GM12878 (cell line): ENCODE measurements at regions of chr4 and their contacts with region 1.

Region 1: DNA sequence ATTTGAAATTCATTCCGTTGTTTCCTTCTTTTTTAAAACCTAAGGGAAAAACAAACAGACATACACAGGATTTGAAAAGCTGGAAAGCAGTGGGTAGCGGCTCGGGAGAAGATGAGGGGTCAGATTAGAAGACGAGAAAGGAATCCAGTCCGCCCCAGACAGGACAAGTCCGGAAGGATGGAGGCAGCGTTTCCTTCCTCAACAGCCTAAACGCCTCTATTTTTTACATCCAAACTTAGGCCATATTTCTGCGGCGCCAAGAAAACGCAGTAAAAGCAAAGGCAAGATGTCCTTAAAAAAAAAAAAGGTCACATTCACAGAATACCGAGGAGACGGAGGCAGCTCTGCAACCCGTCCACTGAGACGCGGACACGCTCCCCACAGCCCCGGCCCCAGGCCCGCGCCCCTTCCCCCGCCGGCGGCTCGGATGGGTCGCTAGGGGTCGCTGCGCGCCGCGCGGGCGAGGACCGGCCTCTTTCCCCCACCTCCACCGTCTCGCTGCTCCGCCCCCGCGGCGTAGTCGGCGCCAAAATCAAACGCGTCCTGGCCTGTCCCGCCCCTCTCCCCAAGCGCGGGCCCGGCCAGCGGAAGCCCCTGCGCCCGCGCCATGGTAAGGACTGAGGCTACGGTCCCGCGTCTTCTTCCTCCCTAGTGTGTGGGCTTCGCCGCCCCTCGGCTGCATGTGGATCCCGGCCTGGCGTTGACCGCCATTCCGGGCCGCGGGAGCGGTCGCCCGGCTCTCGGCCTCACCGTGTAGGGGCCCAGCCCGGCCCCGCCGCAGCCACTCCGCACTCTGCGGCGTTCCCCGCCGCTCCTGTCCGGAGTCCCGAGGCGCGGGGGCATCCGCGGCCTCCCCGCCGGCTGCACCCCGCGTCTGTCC is at the start of gene MND1:
- DNase-seq: no peak
- ATAC-seq: peak; percentile 90
- H3K4me3 ChIP-seq: peak within 1 kb of the TSS; percentile 93
- H3K27ac ChIP-seq: peak within 1 kb of the TSS; percentile 76
- H3K4me1 ChIP-seq: peaks cover 22% of the 10 kb centered on the region; the same call in 1 of the 2 replicates
- H3K27me3 ChIP-seq: no peaks in the 10 kb centered on the region
- CTCF ChIP-seq: peak; percentile 73 to 93 (median 87)
- EP300 ChIP-seq: no peak
- POLR2A ChIP-seq: peak; percentile 87
- RAD21 ChIP-seq: peak; percentile 87
- polyA plus RNA-seq, gene MND1: 51.0 to 55.0 TPM

Region 2: DNA sequence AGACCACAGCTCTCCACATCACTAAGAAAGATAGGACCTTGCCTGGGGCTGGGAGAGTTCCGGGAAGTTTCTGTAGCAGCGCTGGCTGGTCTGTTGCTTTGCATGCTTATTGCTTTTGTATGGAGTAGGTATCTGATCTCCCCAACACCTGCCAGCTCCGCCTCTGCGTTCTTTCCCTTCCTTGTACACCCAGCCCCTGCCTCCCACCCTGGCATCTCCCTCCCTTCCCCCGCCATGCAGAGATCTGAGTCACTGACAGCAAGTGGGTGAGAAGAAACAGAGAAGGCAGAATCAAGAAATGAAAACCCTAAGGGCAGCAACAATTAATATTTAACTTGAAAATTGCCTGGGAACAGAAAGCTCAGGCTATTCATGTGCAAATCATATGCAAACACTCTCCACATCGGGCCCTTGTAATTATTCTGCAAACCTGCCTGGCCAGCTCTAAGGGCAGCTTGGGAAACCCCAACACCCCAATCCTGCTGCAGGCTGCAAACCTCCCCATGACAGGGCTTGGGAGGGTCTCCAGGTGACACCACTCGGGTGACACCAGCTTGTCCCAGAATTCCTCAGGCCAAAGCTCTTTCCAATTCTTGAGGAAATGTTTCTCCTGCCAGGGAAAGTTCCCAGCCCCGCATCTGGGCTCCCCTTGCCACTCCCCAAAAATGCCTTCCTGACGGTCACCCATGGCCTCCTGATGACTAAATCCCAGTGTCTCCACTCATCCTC is 1065.7 kb before region 1 on chr4:
- CTCF ChIA-PET with region 1: no interaction called
- POLR2A ChIA-PET with region 1: no interaction called
- RAD21 ChIA-PET with region 1: no interaction called
- SMC1A ChIA-PET with region 1: no interaction called
- in situ Hi-C with region 1: no loop called
- intact Hi-C with region 1: no loop called
- DNase-seq: peak; percentile 71
- ATAC-seq: peak; percentile 87
- H3K4me3 ChIP-seq: no peak overlapping the region
- H3K27ac ChIP-seq: no peak overlapping the region
- H3K4me1 ChIP-seq: no peaks in the 10 kb centered on the region
- H3K27me3 ChIP-seq: no peaks in the 10 kb centered on the region; a peak in 1 of 4 replicates
- CTCF ChIP-seq: no peak
- EP300 ChIP-seq: no peak; a peak in 1 of 4 replicates
- POLR2A ChIP-seq: no peak
- RAD21 ChIP-seq: no peak

Region 3: GRCh38 chr4:153266988-153267387 is 77.4 kb before region 1 on chr4:
- CTCF ChIA-PET with region 1: no interaction called
- POLR2A ChIA-PET with region 1: no interaction called
- RAD21 ChIA-PET with region 1: no interaction called
- SMC1A ChIA-PET with region 1: no interaction called
- in situ Hi-C with region 1: no loop called
- intact Hi-C with region 1: no loop called
- DNase-seq: no peak
- ATAC-seq: no peak
- H3K4me3 ChIP-seq: no peak overlapping the region
- H3K27ac ChIP-seq: no peak overlapping the region
- H3K4me1 ChIP-seq: no peaks in the 10 kb centered on the region
- H3K27me3 ChIP-seq: no peaks in the 10 kb centered on the region
- CTCF ChIP-seq: no peak
- EP300 ChIP-seq: no peak
- POLR2A ChIP-seq: no peak
- RAD21 ChIP-seq: no peak

Region 4: GRCh38 chr4:153383131-153383530 is 38.8 kb after region 1 on chr4:
- CTCF ChIA-PET with region 1: interaction called, 6 read pairs
- POLR2A ChIA-PET with region 1: no interaction called
- RAD21 ChIA-PET with region 1: interaction called, 10 read pairs
- SMC1A ChIA-PET with region 1: interaction called, 9 read pairs
- in situ Hi-C with region 1: no loop called
- intact Hi-C with region 1: no loop called
- DNase-seq: no peak
- ATAC-seq: no peak
- H3K4me3 ChIP-seq: no peak overlapping the region
- H3K27ac ChIP-seq: no peak overlapping the region
- H3K4me1 ChIP-seq: 0 out of 2 replicates have a peak, but pooled peaks cover 3% of the 10 kb centered on the region
- H3K27me3 ChIP-seq: no peaks in the 10 kb centered on the region
- CTCF ChIP-seq: no peak
- EP300 ChIP-seq: no peak
- POLR2A ChIP-seq: no peak
- RAD21 ChIP-seq: no peak

Region 5: GRCh38 chr4:153432968-153433753 is 88.8 kb after region 1 on chr4:
- CTCF ChIA-PET with region 1: interaction called, 31 read pairs
- POLR2A ChIA-PET with region 1: interaction called, 4 read pairs
- RAD21 ChIA-PET with region 1: interaction called, 13 read pairs
- SMC1A ChIA-PET with region 1: interaction called, 35 read pairs
- in situ Hi-C with region 1: no loop called
- intact Hi-C with region 1: loop called (anchors 1 kb)
- DNase-seq: peak; percentile 99
- ATAC-seq: peak; percentile 91
- H3K4me3 ChIP-seq: peak overlapping the region; percentile 56
- H3K27ac ChIP-seq: peak overlapping the region; percentile 84
- H3K4me1 ChIP-seq: peaks cover 31% of the 10 kb centered on the region
- H3K27me3 ChIP-seq: no peaks in the 10 kb centered on the region
- CTCF ChIP-seq: peak; percentile 86 to 96 (median 93)
- EP300 ChIP-seq: peak; percentile 78
- POLR2A ChIP-seq: peak; percentile 57
- RAD21 ChIP-seq: peak; percentile 99

Region 6: DNA sequence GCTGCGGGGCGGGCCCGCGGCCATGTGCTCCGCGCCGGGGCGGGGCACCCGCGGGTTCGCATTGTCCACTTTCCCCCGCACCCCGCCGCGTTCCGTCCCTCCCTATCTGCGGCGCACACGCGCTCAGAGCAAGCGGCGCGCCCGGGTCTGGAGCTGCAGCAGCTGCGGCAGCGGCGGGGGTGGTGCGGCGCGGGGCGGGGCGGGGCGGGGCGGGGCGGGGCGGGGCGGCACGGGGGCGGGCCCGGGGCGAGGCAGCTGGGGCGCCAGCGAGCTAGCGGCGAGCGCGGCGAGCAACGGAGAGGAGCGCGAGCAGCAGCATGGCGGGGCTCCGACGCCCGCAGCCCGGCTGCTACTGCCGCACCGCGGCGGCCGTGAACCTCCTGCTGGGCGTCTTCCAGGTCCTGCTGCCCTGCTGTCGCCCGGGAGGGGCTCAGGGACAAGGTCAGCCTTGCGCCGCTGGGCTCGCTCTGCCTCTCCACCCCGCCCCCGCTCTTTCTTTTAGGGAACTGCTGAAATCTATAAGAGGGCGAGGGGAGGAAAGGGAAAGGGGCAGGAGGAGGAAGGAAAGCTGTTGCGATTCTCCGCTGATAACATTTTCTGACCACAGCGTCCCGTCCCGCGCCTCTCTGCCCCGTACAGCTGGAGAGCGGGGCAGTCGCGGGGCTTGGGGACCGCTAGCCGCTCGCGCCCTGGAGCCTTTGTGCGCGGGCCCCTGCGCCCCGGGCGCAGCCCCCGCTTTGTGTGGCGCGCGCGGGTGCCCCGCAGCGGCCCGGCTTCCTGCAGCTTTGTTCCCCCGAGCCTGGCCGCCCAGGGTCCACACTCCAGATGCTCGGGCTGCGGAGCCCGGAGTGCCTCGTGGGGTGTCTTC is 121.9 kb after region 1 on chr4 and contains the start of gene TMEM131L:
- CTCF ChIA-PET with region 1: interaction called, 10 read pairs
- POLR2A ChIA-PET with region 1: interaction called, 4 read pairs
- RAD21 ChIA-PET with region 1: interaction called, 8 read pairs
- SMC1A ChIA-PET with region 1: interaction called, 11 read pairs
- in situ Hi-C with region 1: no loop called
- intact Hi-C with region 1: loop called (anchors 1 kb)
- DNase-seq: no peak
- ATAC-seq: peak; percentile 62
- H3K4me3 ChIP-seq: peak within 1 kb of the TSS; percentile 98
- H3K27ac ChIP-seq: peak within 1 kb of the TSS; percentile 88
- H3K4me1 ChIP-seq: peaks cover 18% of the 10 kb centered on the region
- H3K27me3 ChIP-seq: no peaks in the 10 kb centered on the region
- CTCF ChIP-seq: peak in 2 of 3 experiments; percentile 35 to 40; a peak in 3 of 6 replicates
- EP300 ChIP-seq: no peak; a peak in 1 of 4 replicates
- POLR2A ChIP-seq: peak; percentile 93
- RAD21 ChIP-seq: no peak; the same call in 1 of the 2 replicates
- polyA plus RNA-seq, gene TMEM131L: 8.5 to 9.5 TPM

Region 7: GRCh38 chr4:153497988-153498967 is 153.9 kb after region 1 on chr4:
- CTCF ChIA-PET with region 1: interaction called, 3 read pairs
- POLR2A ChIA-PET with region 1: no interaction called
- RAD21 ChIA-PET with region 1: interaction called, 11 read pairs
- SMC1A ChIA-PET with region 1: interaction called, 7 read pairs
- in situ Hi-C with region 1: no loop called
- intact Hi-C with region 1: no loop called
- DNase-seq: peak; percentile 72
- ATAC-seq: peak; percentile 69
- H3K4me3 ChIP-seq: peak overlapping the region; percentile 51
- H3K27ac ChIP-seq: peak overlapping the region; percentile 58
- H3K4me1 ChIP-seq: peaks cover 53% of the 10 kb centered on the region
- H3K27me3 ChIP-seq: no peaks in the 10 kb centered on the region
- CTCF ChIP-seq: no peak
- EP300 ChIP-seq: peak; percentile 23 to 38; a peak in 1 of 4 replicates
- POLR2A ChIP-seq: no peak
- RAD21 ChIP-seq: no peak

Region 8: GRCh38 chr4:153634738-153635353 is 290.5 kb after region 1 on chr4:
- CTCF ChIA-PET with region 1: interaction called, 7 read pairs
- POLR2A ChIA-PET with region 1: no interaction called
- RAD21 ChIA-PET with region 1: interaction called, 77 read pairs
- SMC1A ChIA-PET with region 1: interaction called, 4 read pairs
- in situ Hi-C with region 1: loop called (anchors 5 kb)
- intact Hi-C with region 1: no loop called
- DNase-seq: no peak
- ATAC-seq: peak; percentile 9; the same call in 1 of the 3 replicates
- H3K4me3 ChIP-seq: no peak overlapping the region
- H3K27ac ChIP-seq: no peak overlapping the region
- H3K4me1 ChIP-seq: no peaks in the 10 kb centered on the region
- H3K27me3 ChIP-seq: no peaks in the 10 kb centered on the region
- CTCF ChIP-seq: peak; percentile 24 to 56 (median 53); a peak in 4 of 6 replicates
- EP300 ChIP-seq: no peak
- POLR2A ChIP-seq: no peak
- RAD21 ChIP-seq: 0 out of 2 replicates have a peak, but pooled peaks have one; percentile 16

Region 9: DNA sequence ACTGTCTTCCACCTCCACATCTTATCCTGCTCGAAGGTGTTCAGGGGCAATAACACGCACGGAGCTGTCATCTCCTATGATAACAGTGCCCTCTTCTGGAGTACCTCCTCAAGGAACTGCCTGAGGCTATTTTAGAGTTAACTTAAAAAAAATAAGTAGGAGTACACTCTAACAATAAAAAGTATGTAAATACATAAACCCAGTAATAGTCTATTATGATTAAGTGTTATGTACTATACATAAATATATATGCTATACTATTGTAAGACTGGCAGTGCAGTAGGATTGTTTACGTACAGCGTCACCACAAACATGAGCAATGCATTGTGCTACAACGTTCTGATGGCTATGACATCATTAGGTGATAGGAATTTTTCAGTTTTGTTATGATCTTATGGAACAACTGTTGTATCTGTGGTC is 305.2 kb after region 1 on chr4:
- CTCF ChIA-PET with region 1: interaction called, 142 read pairs
- POLR2A ChIA-PET with region 1: no interaction called
- RAD21 ChIA-PET with region 1: interaction called, 77 read pairs
- SMC1A ChIA-PET with region 1: interaction called, 97 read pairs
- in situ Hi-C with region 1: no loop called
- intact Hi-C with region 1: no loop called
- DNase-seq: no peak
- ATAC-seq: peak; percentile 75
- H3K4me3 ChIP-seq: no peak overlapping the region
- H3K27ac ChIP-seq: no peak overlapping the region
- H3K4me1 ChIP-seq: no peaks in the 10 kb centered on the region
- H3K27me3 ChIP-seq: no peaks in the 10 kb centered on the region
- CTCF ChIP-seq: peak; percentile 39 to 50 (median 48); a peak in 5 of 6 replicates
- EP300 ChIP-seq: no peak
- POLR2A ChIP-seq: no peak
- RAD21 ChIP-seq: peak; percentile 62